ENCODE measurements at regions of chr18 and their contacts with region 1.

Region 1: DNA sequence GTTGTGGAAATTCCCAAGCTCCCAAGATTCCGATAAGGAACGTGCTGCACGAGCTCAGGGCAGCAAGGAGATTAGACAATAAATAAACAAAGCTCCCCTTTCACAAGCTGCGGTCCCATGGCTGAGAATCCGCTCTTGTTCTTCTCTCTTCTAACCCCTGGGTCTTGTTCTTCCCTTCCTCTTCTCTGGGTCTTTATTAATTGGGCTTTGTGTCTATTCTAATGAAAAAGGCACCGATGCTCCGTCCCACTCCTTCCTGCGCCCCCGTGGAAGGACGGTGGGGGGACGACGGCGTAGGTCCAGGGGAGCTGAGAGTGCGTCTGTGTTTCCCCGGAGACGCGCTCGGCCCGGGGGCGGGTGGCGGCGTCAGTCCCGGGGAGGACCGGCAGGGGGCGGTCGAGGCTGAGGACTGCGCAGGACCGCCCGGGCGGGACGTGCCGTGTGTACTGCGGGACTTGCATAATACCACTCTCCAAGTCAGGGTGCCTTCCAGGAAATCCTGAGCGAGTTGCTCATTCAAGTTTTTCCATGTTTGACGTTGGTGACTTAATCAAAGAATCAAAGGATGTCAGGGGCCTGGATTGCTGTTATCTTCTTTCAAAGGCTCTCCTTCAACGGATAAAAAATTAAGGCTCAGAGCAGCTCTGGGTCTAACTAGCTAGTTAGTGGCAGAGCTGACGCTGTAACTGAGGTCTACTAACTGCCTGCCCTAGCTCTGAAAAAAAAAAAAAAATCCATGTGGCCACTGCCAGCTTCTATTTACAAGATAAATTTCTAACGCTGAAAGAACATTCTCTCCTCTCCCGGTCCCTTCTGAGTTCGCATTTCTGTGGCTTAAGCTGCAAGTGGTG is 321.4 kb downstream of the TGIF1 start:
- DNase-seq: peak; percentile 64 to 90 (median 88)
- H3K4me3 ChIP-seq: peak overlapping the region; percentile 20
- H3K27ac ChIP-seq: no peak overlapping the region
- H3K4me1 ChIP-seq: no peaks in the 10 kb centered on the region
- H3K27me3 ChIP-seq: no peaks in the 10 kb centered on the region
- CTCF ChIP-seq: peak; percentile 56 to 93 (median 72)
- EP300 ChIP-seq: no peak
- POLR2A ChIP-seq: no peak

Region 2: GRCh38 chr18:3728704-3729437 is 42.5 kb before region 1 on chr18:
- intact Hi-C with region 1: no loop called
- DNase-seq: no peak
- H3K4me3 ChIP-seq: no peak overlapping the region
- H3K27ac ChIP-seq: no peak overlapping the region
- H3K4me1 ChIP-seq: no peaks in the 10 kb centered on the region
- H3K27me3 ChIP-seq: no peaks in the 10 kb centered on the region
- CTCF ChIP-seq: no peak
- EP300 ChIP-seq: no peak
- POLR2A ChIP-seq: no peak

Region 3: DNA sequence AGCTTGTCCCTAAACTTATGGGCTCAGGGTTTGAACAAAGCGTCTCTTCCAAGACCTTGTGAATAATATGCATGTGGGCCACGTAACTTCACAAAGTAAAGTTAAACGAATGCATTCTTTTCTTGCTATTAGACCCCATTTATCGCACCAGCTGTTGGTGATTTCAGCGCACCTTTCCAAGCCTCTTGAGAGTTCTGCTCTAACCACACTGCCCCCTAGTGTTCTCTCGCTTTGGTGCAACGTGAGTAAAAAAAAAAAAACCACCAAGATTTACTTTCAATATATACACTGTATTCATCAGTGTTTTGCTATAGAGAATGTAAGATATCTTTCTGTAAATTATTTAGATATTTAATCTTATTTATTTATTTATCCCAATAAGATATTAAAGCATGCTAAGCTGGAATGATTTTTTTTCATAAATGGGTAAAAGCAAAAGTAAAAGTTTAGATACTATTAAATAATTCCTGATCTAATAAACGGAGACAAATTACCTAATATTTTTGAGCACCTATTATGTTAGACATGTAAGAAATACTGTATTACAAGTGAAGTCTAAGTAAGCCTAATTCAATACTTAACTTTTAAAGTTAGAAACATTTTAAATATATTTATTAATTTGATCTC is 224.2 kb after region 1 on chr18:
- intact Hi-C with region 1: loop called in 1 of 4 experiments (anchors 10 kb)
- DNase-seq: peak in 3 of 5 donors; percentile 31 to 60 (median 39)
- H3K4me3 ChIP-seq: no peak overlapping the region
- H3K27ac ChIP-seq: no peak overlapping the region
- H3K4me1 ChIP-seq: no peaks in the 10 kb centered on the region
- H3K27me3 ChIP-seq: no peaks in the 10 kb centered on the region
- CTCF ChIP-seq: peak in 2 of 3 donors; percentile 21 to 41
- EP300 ChIP-seq: no peak
- POLR2A ChIP-seq: no peak

Measured in ovary (tissue), 10 donors.